ENCODE measurements at regions of chr5 and their contacts with region 1.

Region 1: GRCh38 chr5:95900383-95900958 is 61.2 kb downstream of the ELL2 start:
- DNase-seq: no peak
- ATAC-seq: no peak
- H3K4me3 ChIP-seq: no peak overlapping the region
- H3K4me3 Mint-ChIP-seq: no peak overlapping the region
- H3K27ac ChIP-seq: no peak overlapping the region
- H3K27ac Mint-ChIP-seq: no peak overlapping the region
- H3K4me1 ChIP-seq: no peaks in the 10 kb centered on the region
- H3K4me1 Mint-ChIP-seq: no peaks in the 10 kb centered on the region
- H3K27me3 ChIP-seq: no peaks in the 10 kb centered on the region
- H3K27me3 Mint-ChIP-seq: no peaks in the 10 kb centered on the region
- CTCF ChIP-seq: no peak

Region 2: GRCh38 chr5:95382801-95383200 is 517.7 kb before region 1 on chr5:
- CTCF ChIA-PET with region 1: no interaction called
- POLR2A ChIA-PET with region 1: no interaction called
- intact Hi-C with region 1: no loop called
- DNase-seq: no peak
- ATAC-seq: no peak
- H3K4me3 ChIP-seq: no peak overlapping the region
- H3K4me3 Mint-ChIP-seq: no peak overlapping the region
- H3K27ac ChIP-seq: no peak overlapping the region
- H3K27ac Mint-ChIP-seq: no peak overlapping the region
- H3K4me1 ChIP-seq: no peaks in the 10 kb centered on the region
- H3K4me1 Mint-ChIP-seq: peaks cover 14% of the 10 kb centered on the region
- H3K27me3 ChIP-seq: no peaks in the 10 kb centered on the region
- H3K27me3 Mint-ChIP-seq: peaks cover 3% of the 10 kb centered on the region
- CTCF ChIP-seq: no peak

Region 3: GRCh38 chr5:95864944-95865504 is 35.4 kb before region 1 on chr5:
- CTCF ChIA-PET with region 1: no interaction called
- POLR2A ChIA-PET with region 1: no interaction called
- intact Hi-C with region 1: loop called in 1 of 2 experiments (anchors 5 kb)
- DNase-seq: no peak
- ATAC-seq: no peak
- H3K4me3 ChIP-seq: no peak overlapping the region
- H3K4me3 Mint-ChIP-seq: no peak overlapping the region
- H3K27ac ChIP-seq: no peak overlapping the region
- H3K27ac Mint-ChIP-seq: no peak overlapping the region
- H3K4me1 ChIP-seq: peaks cover 25% of the 10 kb centered on the region
- H3K4me1 Mint-ChIP-seq: peaks cover 35% of the 10 kb centered on the region
- H3K27me3 ChIP-seq: no peaks in the 10 kb centered on the region
- H3K27me3 Mint-ChIP-seq: peaks cover 6% of the 10 kb centered on the region
- CTCF ChIP-seq: no peak

Measured in CD8-positive, alpha-beta T cell (primary cell).